Caco-2 (cell line): ENCODE measurements at regions of chr16 and their contacts with region 1.

Region 1: GRCh38 chr16:11255737-11256660 is at the start of gene SOCS1:
- DNase-seq: peak; percentile 79 to 91
- H3K4me3 ChIP-seq: peak within 1 kb of the TSS; percentile 81
- H3K4me3 Mint-ChIP-seq: peak within 1 kb of the TSS; percentile 97
- H3K27ac Mint-ChIP-seq: peak within 1 kb of the TSS; percentile 95
- H3K4me1 ChIP-seq: peaks cover 27% of the 10 kb centered on the region
- H3K4me1 Mint-ChIP-seq: peaks cover 24% of the 10 kb centered on the region
- H3K27me3 ChIP-seq: no peaks in the 10 kb centered on the region
- H3K27me3 Mint-ChIP-seq: no peaks in the 10 kb centered on the region
- CTCF ChIP-seq: peak in 1 of 2 experiments; percentile 83
- total RNA-seq, gene SOCS1: 8.1 and 13.2 TPM in 2 replicates

Region 2: DNA sequence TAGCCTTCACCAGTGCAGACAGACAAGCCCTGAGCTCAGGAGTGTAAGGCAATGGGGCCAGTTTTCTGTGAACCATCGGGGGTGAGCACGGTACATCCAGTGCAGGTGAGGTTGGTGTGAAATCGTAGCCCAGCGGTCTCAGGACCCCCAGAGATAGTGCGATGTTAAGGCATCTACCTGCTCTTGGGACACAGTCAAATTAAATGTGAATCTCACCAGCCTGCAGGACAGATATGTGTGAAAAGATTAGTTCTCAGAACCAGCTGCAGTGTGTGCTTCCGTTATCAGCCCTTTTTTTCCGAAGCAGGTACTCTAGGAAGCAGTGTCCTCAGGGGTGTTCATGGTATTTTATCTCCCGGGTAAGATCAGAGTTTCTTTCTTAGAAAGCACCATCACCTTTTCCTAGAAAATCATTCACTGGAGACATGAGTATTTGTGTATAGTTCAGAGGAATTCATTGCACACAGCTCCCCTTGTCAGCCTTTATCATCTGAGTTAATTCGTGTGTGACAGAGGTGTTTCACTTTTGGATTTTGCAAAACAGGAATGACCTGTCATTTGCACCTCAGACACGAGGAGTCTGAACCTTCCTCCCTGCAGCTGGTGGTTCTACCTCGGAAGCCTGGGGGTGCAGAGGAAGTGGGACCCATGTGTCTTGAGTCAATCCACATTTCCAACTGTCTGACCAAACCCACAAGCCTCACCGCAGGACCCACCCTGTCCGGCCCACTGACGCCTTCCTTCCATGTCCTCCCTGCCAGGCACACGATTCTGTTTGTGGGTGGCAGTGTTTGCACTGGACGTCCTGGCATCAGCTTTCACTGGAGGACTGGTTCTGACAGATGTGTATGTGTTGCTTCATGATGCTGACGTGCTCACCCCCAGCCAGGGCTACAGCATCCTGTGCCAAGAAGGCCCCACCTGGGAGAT is 203.9 kb before region 1 on chr16:
- CTCF ChIA-PET with region 1: no interaction called
- POLR2A ChIA-PET with region 1: interaction called, 10 read pairs
- intact Hi-C with region 1: no loop called
- DNase-seq: no peak
- H3K4me3 ChIP-seq: no peak overlapping the region
- H3K4me3 Mint-ChIP-seq: no peak overlapping the region
- H3K27ac Mint-ChIP-seq: no peak overlapping the region
- H3K4me1 ChIP-seq: peaks cover 7% of the 10 kb centered on the region; the same call in 1 of the 2 replicates
- H3K4me1 Mint-ChIP-seq: peaks cover 12% of the 10 kb centered on the region
- H3K27me3 ChIP-seq: no peaks in the 10 kb centered on the region
- H3K27me3 Mint-ChIP-seq: no peaks in the 10 kb centered on the region
- CTCF ChIP-seq: no peak

Region 3: GRCh38 chr16:11126399-11127054 is 129.5 kb before region 1 on chr16:
- CTCF ChIA-PET with region 1: no interaction called
- POLR2A ChIA-PET with region 1: no interaction called
- intact Hi-C with region 1: no loop called
- DNase-seq: no peak
- H3K4me3 ChIP-seq: no peak overlapping the region
- H3K4me3 Mint-ChIP-seq: no peak overlapping the region
- H3K27ac Mint-ChIP-seq: no peak overlapping the region
- H3K4me1 ChIP-seq: no peaks in the 10 kb centered on the region
- H3K4me1 Mint-ChIP-seq: peaks cover under 1% of the 10 kb centered on the region
- H3K27me3 ChIP-seq: no peaks in the 10 kb centered on the region
- H3K27me3 Mint-ChIP-seq: no peaks in the 10 kb centered on the region
- CTCF ChIP-seq: no peak

Region 4: GRCh38 chr16:11278681-11279628 is 23.0 kb after region 1 on chr16:
- CTCF ChIA-PET with region 1: interaction called, 29 read pairs
- POLR2A ChIA-PET with region 1: interaction called, 21 read pairs
- intact Hi-C with region 1: loop called (anchors 2 kb)
- DNase-seq: no peak
- H3K4me3 ChIP-seq: no peak overlapping the region
- H3K4me3 Mint-ChIP-seq: peak overlapping the region; percentile 38
- H3K27ac Mint-ChIP-seq: peak overlapping the region; percentile 87
- H3K4me1 ChIP-seq: peaks cover 21% of the 10 kb centered on the region
- H3K4me1 Mint-ChIP-seq: peaks cover 16% of the 10 kb centered on the region
- H3K27me3 ChIP-seq: no peaks in the 10 kb centered on the region
- H3K27me3 Mint-ChIP-seq: no peaks in the 10 kb centered on the region
- CTCF ChIP-seq: no peak

Region 5: GRCh38 chr16:11328172-11329070 is 72.4 kb after region 1 on chr16:
- CTCF ChIA-PET with region 1: interaction called, 4 read pairs
- POLR2A ChIA-PET with region 1: interaction called, 15 read pairs
- intact Hi-C with region 1: no loop called
- DNase-seq: peak; percentile 56 to 73
- H3K4me3 ChIP-seq: no peak overlapping the region
- H3K4me3 Mint-ChIP-seq: peak overlapping the region; percentile 61
- H3K27ac Mint-ChIP-seq: peak overlapping the region; percentile 86
- H3K4me1 ChIP-seq: peaks cover 25% of the 10 kb centered on the region
- H3K4me1 Mint-ChIP-seq: peaks cover 26% of the 10 kb centered on the region
- H3K27me3 ChIP-seq: no peaks in the 10 kb centered on the region
- H3K27me3 Mint-ChIP-seq: no peaks in the 10 kb centered on the region
- CTCF ChIP-seq: no peak

Region 6: DNA sequence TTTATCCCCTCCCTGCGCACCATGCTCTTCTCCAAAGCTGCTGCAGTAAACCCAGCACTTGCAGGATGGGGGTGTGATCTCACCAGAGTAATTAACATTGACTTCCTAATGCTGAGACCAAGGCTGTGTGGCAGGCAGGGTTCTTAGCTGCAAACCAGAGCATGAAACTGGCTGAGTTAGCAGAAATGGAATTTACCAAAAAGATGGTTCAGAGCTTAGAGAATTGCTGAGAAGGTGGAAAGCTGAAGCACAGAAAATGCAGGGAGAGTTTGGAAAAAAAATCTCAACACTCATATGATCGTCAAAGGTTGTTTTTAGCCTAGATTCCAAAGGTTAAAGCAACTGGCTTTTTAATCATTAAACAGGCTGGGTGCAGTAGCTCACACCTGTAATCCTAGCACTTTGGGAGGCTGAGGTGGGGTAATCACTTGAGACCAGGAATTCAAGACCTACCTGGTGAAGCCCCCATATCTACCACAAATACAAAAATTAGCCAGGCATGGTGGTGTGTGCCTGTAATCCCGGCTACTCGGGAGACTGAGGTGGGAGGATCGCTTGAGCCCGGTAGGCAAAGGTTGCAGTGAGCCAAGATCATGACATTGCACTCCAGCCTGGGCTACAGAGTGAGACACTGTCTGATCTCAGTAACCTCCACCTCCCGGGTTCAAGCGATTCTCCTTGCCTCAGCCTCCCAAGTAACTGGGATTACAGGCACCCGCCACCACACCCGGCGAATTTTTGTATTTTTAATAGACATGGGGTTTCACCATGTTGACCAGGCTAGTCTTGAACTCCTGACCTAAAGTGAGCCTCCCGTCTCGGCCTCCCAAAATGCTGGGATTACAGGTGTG is 492.6 kb after region 1 on chr16:
- CTCF ChIA-PET with region 1: no interaction called
- POLR2A ChIA-PET with region 1: interaction called, 12 read pairs
- intact Hi-C with region 1: no loop called
- DNase-seq: peak; percentile 47 to 56
- H3K4me3 ChIP-seq: peak overlapping the region; percentile 10; the same call in 1 of the 2 replicates
- H3K4me3 Mint-ChIP-seq: peak overlapping the region; percentile 70
- H3K27ac Mint-ChIP-seq: peak overlapping the region; percentile 89
- H3K4me1 ChIP-seq: peaks cover 47% of the 10 kb centered on the region
- H3K4me1 Mint-ChIP-seq: peaks cover 32% of the 10 kb centered on the region
- H3K27me3 ChIP-seq: no peaks in the 10 kb centered on the region
- H3K27me3 Mint-ChIP-seq: no peaks in the 10 kb centered on the region
- CTCF ChIP-seq: no peak